Astrocyte of the cerebellum (primary cell): ENCODE measurements at regions of chr6 and their contacts with region 1.

Region 1: DNA sequence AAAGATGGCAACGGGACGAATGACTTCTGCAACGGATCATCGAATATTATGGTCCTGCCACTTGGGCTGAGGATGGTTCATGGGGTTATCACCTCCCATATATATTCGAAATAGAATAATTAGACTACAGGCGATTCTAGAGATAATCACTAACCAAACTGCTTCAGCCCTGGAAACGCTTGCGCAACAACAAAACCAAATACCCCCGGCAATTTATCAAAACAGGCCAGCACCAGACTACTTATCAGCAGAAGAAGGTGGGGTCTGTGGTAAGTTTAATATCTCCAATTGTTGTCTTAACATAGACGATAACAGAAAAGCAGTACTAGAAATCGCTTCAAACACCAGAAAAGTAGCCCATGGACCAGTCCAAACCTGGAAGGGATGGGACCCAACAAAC is 31.0 kb upstream of the ULBP3 start:
- DNase-seq: no peak
- H3K4me3 ChIP-seq: no peak overlapping the region
- CTCF ChIP-seq: no peak

Region 2: DNA sequence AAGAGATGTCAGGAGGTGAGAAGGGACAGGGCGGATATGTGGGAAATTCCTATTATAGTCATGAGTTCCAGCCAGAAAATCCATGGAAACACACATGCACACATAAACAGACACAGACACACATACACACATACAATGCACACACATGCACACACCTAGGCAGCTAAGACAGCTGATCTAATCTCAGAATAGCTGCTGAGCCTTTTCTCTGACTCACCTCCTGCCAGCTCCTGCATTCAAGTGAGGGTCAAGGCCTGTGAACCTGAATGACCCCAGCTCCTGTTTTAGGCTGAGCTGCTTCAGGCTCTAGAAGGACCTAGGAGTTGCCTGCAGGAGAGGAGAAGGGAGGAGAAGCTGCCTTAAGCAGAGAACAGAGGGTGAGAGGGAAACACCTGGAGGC is 53.0 kb before region 1 on chr6:
- in situ Hi-C with region 1: no loop called
- DNase-seq: no peak
- H3K4me3 ChIP-seq: no peak overlapping the region
- CTCF ChIP-seq: no peak

Region 3: GRCh38 chr6:150380256-150380655 is 280.3 kb after region 1 on chr6:
- in situ Hi-C with region 1: loop called (anchors 5 kb)
- DNase-seq: no peak
- H3K4me3 ChIP-seq: no peak overlapping the region
- CTCF ChIP-seq: no peak